A673 (cell line): ENCODE measurements at regions of chr3 and their contacts with region 1.

Region 1: GRCh38 chr3:88058591-88059368 is at the starts of genes CGGBP1 and ZNF654:
- DNase-seq: peak; percentile 99
- H3K4me3 ChIP-seq: peak within 1 kb of the TSS; percentile 94
- H3K27ac ChIP-seq: peak within 1 kb of the TSS; percentile 92
- H3K4me1 ChIP-seq: peaks cover 41% of the 10 kb centered on the region
- H3K27me3 ChIP-seq: no peaks in the 10 kb centered on the region
- CTCF ChIP-seq: no peak
- total RNA-seq, gene CGGBP1: 113 and 120 TPM in 2 replicates
- total RNA-seq, gene ZNF654: 21.9 and 25.0 TPM in 2 replicates

Region 2: GRCh38 chr3:86990734-86991481 is 1067.9 kb before region 1 on chr3 and contains the start of gene VGLL3:
- CTCF ChIA-PET with region 1: interaction called, 10 read pairs
- POLR2A ChIA-PET with region 1: no interaction called
- intact Hi-C with region 1: no loop called
- DNase-seq: peak; percentile 97
- H3K4me3 ChIP-seq: peak within 1 kb of the TSS; percentile 86
- H3K27ac ChIP-seq: peak within 1 kb of the TSS; percentile 85
- H3K4me1 ChIP-seq: peaks cover 53% of the 10 kb centered on the region
- H3K27me3 ChIP-seq: no peaks in the 10 kb centered on the region
- CTCF ChIP-seq: 0 out of 2 replicates have a peak, but pooled peaks have one; percentile 28
- total RNA-seq, gene VGLL3: 20.7 and 26.8 TPM in 2 replicates

Region 3: DNA sequence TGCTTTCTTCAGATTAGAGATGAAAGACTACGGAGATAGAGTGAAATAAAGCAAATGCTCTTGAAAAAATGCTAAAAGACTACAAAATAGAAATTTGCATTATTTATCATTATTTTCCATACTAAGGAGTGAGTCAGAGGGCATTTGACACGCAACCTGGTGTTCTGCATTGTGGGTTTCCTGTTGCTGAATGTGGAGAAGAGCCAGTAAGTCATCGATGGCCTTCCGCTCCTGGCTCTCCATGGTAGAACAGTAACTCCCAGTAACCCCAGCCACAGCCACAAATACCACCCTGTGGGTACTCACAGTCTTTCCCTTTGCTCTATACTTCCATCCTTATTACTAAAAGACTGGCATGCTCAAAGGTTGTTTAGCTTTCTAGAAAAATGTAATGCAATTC is 61.5 kb before region 1 on chr3:
- CTCF ChIA-PET with region 1: no interaction called
- POLR2A ChIA-PET with region 1: no interaction called
- intact Hi-C with region 1: no loop called
- DNase-seq: peak; percentile 84
- H3K4me3 ChIP-seq: peak overlapping the region; percentile 28
- H3K27ac ChIP-seq: peak overlapping the region; percentile 77
- H3K4me1 ChIP-seq: peaks cover 34% of the 10 kb centered on the region
- H3K27me3 ChIP-seq: no peaks in the 10 kb centered on the region
- CTCF ChIP-seq: no peak

Region 4: DNA sequence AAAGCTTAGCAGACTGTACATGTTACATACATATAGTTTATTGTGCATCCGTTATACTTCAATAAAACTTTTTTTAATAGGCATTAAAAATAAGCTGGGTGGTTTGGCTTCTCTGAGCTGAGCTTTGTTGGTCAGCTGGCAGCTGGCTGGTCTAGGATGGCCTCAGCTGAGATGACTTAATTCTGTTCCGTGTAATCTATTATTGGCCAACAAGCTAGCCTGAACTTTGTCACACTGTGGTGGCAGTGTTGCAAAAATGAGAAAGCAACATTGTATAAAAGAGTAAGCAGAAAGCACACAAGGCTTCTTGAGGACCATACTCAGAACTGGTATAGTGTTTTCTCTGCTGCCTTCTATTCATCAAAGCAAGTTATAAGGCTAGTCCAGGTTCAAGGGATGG is 45.2 kb before region 1 on chr3:
- CTCF ChIA-PET with region 1: no interaction called
- POLR2A ChIA-PET with region 1: no interaction called
- intact Hi-C with region 1: loop called (anchors 5 kb)
- DNase-seq: no peak
- H3K4me3 ChIP-seq: no peak overlapping the region
- H3K27ac ChIP-seq: no peak overlapping the region
- H3K4me1 ChIP-seq: peaks cover 3% of the 10 kb centered on the region
- H3K27me3 ChIP-seq: no peaks in the 10 kb centered on the region
- CTCF ChIP-seq: no peak

Region 5: GRCh38 chr3:88141458-88142083 is 82.8 kb after region 1 on chr3:
- CTCF ChIA-PET with region 1: interaction called, 14 read pairs
- POLR2A ChIA-PET with region 1: no interaction called
- intact Hi-C with region 1: loop called (anchors 5 kb)
- DNase-seq: peak; percentile 58
- H3K4me3 ChIP-seq: no peak overlapping the region
- H3K27ac ChIP-seq: no peak overlapping the region
- H3K4me1 ChIP-seq: peaks cover 38% of the 10 kb centered on the region
- H3K27me3 ChIP-seq: no peaks in the 10 kb centered on the region
- CTCF ChIP-seq: no peak

Region 6: DNA sequence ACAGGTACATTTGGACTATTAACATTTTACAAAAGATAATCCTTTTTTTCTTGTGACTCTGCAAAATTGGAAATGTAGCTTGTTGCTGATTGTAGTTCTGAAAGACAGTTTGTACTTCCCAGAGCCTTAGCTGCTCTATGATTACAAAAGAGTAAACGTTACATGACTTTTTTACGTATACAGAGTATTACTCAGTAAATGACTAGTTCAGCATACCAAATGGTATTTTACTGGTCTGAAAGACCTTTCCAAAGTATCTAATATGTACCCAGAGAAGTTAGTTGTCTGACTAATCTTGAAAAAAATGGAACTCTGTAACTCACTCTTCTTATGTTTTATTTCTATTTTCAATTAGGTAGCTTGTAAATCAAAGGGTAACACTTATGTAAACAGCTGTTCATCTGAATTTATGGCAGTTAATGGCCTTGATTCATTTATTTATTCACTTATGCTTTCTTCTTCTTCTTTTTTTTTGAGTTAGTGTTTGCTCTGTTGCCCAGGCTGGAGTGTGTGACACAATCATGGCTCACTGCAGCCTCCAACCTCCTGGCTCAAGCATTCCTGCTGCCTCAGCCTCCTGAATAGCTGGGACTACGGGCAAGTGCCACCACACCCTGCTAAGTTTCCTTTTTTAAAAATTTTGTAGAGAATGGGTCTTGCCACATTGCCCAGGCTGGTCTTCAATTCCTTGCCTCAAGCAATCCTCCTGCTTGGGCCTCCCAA is 242.7 kb after region 1 on chr3:
- CTCF ChIA-PET with region 1: no interaction called
- POLR2A ChIA-PET with region 1: no interaction called
- intact Hi-C with region 1: no loop called
- DNase-seq: no peak
- H3K4me3 ChIP-seq: no peak overlapping the region
- H3K27ac ChIP-seq: no peak overlapping the region
- H3K4me1 ChIP-seq: peaks cover 6% of the 10 kb centered on the region
- H3K27me3 ChIP-seq: no peaks in the 10 kb centered on the region
- CTCF ChIP-seq: no peak